Activated CD4-positive, alpha-beta memory T cell treated with anti-CD3 and anti-CD28 coated beads, Interleukin-2, amount 10 ng/mL, durations not matched to agents 7 days and 5 days (primary cell): ENCODE measurements at regions of chr12 and their contacts with region 1.

Region 1: DNA sequence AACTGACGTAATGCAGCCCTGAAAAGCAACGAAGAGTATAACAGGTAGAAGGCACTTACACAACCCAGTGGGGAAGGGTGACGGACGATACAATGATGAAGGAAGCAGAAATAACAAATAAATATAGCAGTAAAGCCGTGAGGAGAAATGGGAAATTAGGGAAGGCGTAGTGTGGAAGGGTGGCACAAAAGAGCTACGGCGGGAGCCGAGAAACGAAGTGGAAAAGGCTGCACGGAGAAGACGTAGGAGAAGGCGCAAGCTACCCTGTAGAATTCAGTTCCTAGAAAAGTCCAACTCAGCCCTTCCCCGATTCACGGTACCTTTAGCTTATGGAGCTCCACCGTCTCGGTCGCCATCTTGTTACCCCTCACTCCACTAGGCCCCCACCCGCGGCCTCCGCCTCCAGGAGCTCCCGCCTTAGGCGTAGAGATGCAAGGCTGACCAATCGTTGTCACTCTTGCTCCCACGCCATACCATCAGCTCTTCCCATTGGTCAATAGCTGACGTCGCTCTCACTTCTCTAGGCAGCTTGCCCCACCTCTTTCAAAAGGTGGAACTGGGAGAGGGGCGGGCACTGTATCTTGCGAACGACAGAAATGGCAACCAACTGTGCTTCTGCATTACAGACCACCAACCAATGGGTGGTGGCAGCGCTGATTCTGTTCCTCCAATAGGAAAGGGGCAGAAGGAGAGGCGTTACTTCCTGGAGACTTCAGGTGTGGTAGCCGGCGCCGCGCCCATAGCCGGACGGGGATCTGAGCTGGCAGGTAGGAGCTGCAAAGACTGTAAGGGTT is at the starts of genes ORMDL2 and SARNP:
- DNase-seq: peak; percentile 98
- H3K4me3 Mint-ChIP-seq: no peak within 1 kb of the TSS
- H3K27ac Mint-ChIP-seq: no peak within 1 kb of the TSS
- H3K4me1 Mint-ChIP-seq: peaks cover 47% of the 10 kb centered on the region
- H3K27me3 Mint-ChIP-seq: no peaks in the 10 kb centered on the region
- total RNA-seq, gene ORMDL2: 56.3 to 60.2 TPM
- total RNA-seq, gene SARNP: 88.3 to 88.6 TPM

Region 2: DNA sequence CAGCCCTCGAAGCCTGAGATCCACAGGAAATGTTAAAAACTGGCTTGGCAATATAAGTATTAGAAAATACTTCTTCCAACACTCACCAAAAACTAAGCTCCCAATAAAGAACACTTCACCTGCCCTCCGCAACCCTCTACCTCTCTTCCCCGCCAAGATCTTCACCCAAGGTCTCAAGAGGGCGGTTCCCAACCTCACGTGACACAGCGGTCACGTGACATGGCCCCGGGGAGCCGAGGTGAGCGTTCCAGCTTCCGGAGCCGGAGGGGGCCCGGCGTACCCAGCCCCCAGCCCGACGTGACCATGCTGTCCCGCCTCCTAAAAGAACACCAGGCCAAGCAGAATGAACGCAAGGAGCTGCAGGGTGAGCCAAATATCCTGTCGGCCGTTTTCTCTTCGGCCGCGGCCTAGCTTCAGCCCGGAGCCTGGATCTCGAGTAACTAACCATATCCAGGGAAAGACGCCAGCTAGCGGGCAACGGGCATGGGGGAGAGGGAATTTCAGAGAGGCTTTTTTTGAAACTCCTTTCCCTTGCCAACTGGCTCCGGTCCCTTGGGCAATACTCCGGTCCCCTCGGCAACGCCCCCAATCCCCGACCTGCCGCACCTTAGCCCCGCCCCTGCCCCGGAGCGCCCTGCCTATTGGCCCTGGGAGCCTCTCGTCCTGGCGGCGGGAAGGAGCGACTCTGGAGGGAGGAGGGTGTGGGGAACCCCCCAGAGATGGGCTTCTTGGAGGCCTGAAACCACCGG is 101.5 kb before region 1 on chr12 and contains the start of gene BLOC1S1:
- CTCF ChIA-PET with region 1: interaction called, 4 read pairs
- POLR2A ChIA-PET with region 1: interaction called, 14 read pairs
- DNase-seq: peak; percentile 95
- H3K4me3 Mint-ChIP-seq: peak within 1 kb of the TSS; percentile 94
- H3K27ac Mint-ChIP-seq: peak within 1 kb of the TSS; percentile 93
- H3K4me1 Mint-ChIP-seq: peaks cover 54% of the 10 kb centered on the region
- H3K27me3 Mint-ChIP-seq: peaks cover 10% of the 10 kb centered on the region
- total RNA-seq, gene BLOC1S1: 156 to 162 TPM

Region 3: GRCh38 chr12:55806982-55807381 is 10.6 kb before region 1 on chr12:
- CTCF ChIA-PET with region 1: interaction called, 3 read pairs
- POLR2A ChIA-PET with region 1: interaction called, 19 read pairs
- DNase-seq: no peak
- H3K4me3 Mint-ChIP-seq: no peak overlapping the region
- H3K27ac Mint-ChIP-seq: no peak overlapping the region
- H3K4me1 Mint-ChIP-seq: peaks cover 14% of the 10 kb centered on the region
- H3K27me3 Mint-ChIP-seq: no peaks in the 10 kb centered on the region

Region 4: DNA sequence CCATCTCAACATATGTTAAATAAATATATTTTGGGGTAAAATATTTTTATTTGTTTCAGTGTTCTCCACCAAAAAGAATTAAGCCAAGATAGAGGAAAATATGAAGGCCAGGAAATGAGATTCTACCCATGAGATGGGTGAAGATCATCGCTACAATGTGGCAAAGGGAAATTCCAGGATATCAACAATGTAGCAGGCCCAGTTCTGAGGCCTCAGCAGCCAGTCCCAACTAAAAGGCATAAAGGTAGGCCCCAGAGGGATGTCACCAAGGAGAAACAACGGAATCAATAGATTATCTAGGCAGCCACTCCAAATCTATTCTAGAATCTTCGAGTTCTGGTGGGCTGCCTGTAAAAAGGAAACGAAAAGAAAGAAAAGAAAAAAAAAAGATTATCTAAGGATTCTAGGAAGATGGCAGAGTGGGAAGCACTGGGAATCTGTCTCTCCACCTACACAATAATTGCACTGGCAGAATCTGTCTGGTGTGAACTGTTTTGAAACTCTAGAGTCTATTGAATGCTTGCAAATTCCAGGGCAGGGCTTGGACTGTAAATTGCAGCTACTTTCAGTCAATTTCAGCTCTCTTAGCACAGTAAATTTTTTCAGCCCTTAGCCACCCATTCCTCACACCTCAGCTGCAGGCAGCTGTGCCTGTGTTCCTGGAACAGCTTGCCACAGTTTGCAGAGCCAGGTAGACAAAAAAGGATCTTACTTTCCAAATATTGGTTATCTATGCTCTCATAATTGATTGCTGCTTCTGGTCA is 58.3 kb after region 1 on chr12:
- CTCF ChIA-PET with region 1: no interaction called
- POLR2A ChIA-PET with region 1: no interaction called
- DNase-seq: no peak
- H3K4me3 Mint-ChIP-seq: no peak overlapping the region
- H3K27ac Mint-ChIP-seq: no peak overlapping the region
- H3K4me1 Mint-ChIP-seq: peaks cover 2% of the 10 kb centered on the region
- H3K27me3 Mint-ChIP-seq: no peaks in the 10 kb centered on the region

Region 5: DNA sequence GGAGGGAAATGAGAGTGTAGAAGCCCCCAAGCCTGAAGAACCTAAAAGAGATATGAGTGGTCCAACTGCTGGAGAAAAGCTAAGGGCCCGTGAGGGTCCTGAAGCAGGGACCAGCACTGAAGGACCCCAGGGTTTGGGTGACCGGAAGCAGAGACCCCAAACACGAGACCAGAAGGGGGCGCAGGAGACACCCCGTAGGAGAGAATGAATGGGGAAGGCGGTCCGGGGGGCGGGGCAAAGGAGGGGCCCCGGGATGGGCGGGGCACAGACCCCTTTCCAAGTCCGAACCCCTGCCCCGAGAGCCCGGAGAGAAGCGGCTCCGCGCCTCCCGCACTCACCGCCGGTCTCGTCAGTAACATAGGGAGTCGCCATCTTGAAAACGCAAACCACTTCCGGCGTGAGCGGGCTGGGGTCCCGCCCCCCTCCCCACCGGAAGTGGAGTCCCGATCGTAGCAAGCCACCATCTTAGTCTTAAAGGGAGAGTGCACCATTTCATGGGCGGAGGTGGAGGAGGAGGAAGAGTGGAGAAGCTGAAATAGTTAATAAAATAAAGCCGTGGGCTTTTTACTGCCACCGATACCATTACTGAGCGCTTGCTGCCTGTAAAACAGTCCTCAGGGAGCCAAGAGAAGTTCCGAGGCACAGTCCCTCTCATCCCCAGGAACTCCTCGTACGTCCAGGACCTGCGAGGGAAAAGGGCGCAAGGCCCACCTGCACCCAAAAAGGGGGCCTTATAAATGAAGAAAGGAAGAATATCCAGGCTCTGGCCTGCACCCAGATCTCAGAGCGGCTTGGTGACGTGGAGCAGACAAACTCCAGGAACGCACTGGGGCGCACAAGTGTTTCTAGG is 109.4 kb after region 1 on chr12:
- CTCF ChIA-PET with region 1: interaction called, 51 read pairs
- POLR2A ChIA-PET with region 1: interaction called, 91 read pairs
- DNase-seq: peak; percentile 95
- H3K4me3 Mint-ChIP-seq: peak overlapping the region; percentile 91
- H3K27ac Mint-ChIP-seq: peak overlapping the region; percentile 96
- H3K4me1 Mint-ChIP-seq: peaks cover 53% of the 10 kb centered on the region
- H3K27me3 Mint-ChIP-seq: no peaks in the 10 kb centered on the region

Region 6: DNA sequence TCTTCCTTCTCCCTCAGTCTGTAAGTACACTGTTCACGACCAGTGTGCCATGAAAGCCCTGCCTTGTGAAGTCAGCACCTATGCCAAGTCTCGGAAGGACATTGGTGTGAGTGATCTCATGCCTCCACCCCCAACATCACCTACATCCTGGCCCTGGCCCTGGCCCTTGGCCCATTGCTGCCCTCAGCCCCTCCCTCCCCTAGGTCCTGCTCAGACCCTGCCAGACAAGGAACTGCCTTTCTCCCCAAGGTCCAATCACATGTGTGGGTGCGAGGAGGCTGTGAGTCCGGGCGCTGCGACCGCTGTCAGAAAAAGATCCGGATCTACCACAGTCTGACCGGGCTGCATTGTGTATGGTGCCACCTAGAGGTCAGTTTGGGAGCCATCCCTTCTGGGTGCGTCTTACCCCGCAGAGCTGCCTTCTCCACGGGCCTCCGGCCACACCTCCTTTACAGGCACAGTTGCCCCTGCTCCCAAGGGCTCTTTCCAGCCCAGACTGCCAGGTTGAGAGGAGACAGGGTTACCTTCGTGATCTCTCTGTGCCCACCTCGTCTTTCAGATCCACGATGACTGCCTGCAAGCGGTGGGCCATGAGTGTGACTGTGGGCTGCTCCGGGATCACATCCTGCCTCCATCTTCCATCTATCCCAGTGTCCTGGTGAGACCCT is 122.7 kb after region 1 on chr12:
- CTCF ChIA-PET with region 1: interaction called, 23 read pairs
- POLR2A ChIA-PET with region 1: interaction called, 16 read pairs
- DNase-seq: peak; percentile 86
- H3K4me3 Mint-ChIP-seq: no peak overlapping the region
- H3K27ac Mint-ChIP-seq: peak overlapping the region; percentile 76
- H3K4me1 Mint-ChIP-seq: peaks cover 75% of the 10 kb centered on the region
- H3K27me3 Mint-ChIP-seq: no peaks in the 10 kb centered on the region

Region 7: DNA sequence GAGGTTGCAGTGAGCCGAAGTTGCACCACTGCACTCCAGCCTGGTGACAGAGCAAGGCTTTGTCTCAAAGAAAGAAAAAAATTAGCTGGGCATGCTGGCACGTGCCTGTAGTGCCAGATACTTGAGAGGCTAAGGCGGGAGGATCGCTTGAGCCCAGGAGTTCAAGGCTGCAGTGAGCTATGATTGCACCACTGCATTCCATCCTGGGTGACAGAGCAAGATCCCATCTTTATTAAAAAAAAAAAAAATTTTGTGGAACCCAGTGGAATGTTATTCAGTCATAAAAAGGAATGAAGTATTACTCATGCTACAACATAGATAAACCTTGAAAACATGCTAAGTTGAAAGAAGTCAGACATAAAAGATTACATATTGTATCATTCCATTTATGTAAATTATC is 254.1 kb after region 1 on chr12:
- CTCF ChIA-PET with region 1: no interaction called
- POLR2A ChIA-PET with region 1: no interaction called
- DNase-seq: no peak
- H3K4me3 Mint-ChIP-seq: no peak overlapping the region
- H3K27ac Mint-ChIP-seq: no peak overlapping the region
- H3K4me1 Mint-ChIP-seq: peaks cover 7% of the 10 kb centered on the region
- H3K27me3 Mint-ChIP-seq: peaks cover 7% of the 10 kb centered on the region